Motor neuron (in vitro differentiated cells): ENCODE measurements at regions of chr9 and their contacts with region 1.

Region 1: GRCh38 chr9:76441551-76442322 is 17.2 kb upstream of the GCNT1 start:
- ATAC-seq: peak in 3 of 8 experiments; percentile 44 to 64 (median 62)
- H3K4me3 ChIP-seq: no peak overlapping the region
- H3K27ac ChIP-seq: no peak overlapping the region
- H3K4me1 ChIP-seq: no peaks in the 10 kb centered on the region

Region 2: DNA sequence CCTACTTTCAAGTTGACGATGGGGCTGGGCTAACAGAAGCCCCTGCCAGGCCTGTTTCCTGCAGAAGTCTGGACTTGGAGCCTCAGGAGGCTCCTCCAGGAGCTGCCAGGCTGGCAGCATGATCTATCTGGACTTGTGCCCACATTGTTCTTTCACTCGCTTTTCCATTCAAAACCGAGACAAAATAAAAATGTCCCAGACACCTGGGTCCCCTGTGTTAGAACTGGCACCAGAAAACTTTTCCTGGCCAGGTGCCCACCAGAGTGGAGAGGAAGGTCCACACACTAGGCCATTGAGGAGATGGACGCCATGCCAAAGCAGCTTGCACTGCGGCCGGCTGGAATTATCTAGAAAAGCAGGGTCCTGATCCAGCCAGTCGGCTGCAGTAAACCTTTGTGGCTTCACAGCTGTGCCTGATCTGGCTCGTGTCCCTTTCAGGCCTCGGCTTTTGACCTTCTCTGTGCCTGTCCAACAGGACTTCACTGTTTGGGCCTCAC is 95.5 kb after region 1 on chr9:
- in situ Hi-C with region 1: no loop called
- ATAC-seq: no peak
- H3K4me3 ChIP-seq: no peak overlapping the region
- H3K27ac ChIP-seq: no peak overlapping the region
- H3K4me1 ChIP-seq: no peaks in the 10 kb centered on the region

Region 3: GRCh38 chr9:76634356-76635022 is 192.8 kb after region 1 on chr9:
- in situ Hi-C with region 1: loop called in 1 of 9 experiments (anchors 25 kb)
- ATAC-seq: peak in 1 of 8 experiments; percentile 73
- H3K4me3 ChIP-seq: no peak overlapping the region
- H3K27ac ChIP-seq: no peak overlapping the region
- H3K4me1 ChIP-seq: no peaks in the 10 kb centered on the region

Region 4: DNA sequence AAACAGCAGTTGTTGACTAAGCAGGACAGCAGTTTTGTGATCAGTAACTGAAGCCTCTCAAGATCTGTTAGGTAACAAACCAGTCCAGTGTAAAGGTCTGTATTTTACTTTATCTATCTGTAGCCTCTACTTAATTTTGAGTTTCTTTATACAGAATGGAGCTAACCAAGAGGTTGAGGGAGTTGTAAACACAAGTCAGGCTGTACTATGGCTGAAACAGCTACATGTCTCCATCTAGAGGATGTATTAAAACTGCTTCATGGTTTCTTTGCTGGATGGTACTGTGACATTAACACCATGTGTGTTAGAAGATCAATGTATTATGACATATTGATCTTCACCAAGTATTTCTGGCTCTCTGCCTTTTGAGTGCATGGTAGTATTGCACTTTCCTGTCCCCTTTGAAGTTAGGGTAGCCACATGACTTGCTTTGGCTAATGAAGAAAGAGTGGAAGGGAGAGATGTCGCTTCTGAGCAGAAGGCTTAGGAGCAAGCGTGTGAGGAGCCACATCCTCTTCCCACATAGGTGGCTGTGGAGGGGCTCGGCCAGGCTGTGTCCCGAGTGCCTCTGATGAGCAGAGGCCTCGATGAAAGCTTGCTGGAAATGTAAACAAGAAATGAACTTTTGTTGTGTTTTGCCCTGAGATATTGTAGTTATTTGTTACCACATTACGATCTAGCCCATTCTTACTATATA is 216.9 kb after region 1 on chr9:
- in situ Hi-C with region 1: loop called in 2 of 9 experiments (anchors 10 to 25 kb)
- ATAC-seq: peak in 6 of 8 experiments; percentile 44 to 94 (median 86)
- H3K4me3 ChIP-seq: no peak overlapping the region
- H3K27ac ChIP-seq: no peak overlapping the region
- H3K4me1 ChIP-seq: no peaks in the 10 kb centered on the region

Region 5: GRCh38 chr9:76704593-76705204 is 263.0 kb after region 1 on chr9:
- in situ Hi-C with region 1: loop called in 5 of 9 experiments (anchors 5 to 25 kb)
- ATAC-seq: peak in 6 of 8 experiments; percentile 37 to 97 (median 75)
- H3K4me3 ChIP-seq: no peak overlapping the region
- H3K27ac ChIP-seq: no peak overlapping the region
- H3K4me1 ChIP-seq: peaks cover 19 to 20% of the 10 kb centered on the region in 2 donors